Esophagus muscularis mucosa (tissue), 4 donors: ENCODE measurements at regions of chr5 and their contacts with region 1.

Region 1: GRCh38 chr5:71492817-71493615 is 37.6 kb downstream of the BDP1 start:
- DNase-seq: no peak
- H3K4me3 ChIP-seq: no peak overlapping the region
- H3K27ac ChIP-seq: no peak overlapping the region
- H3K4me1 ChIP-seq: no peaks in the 10 kb centered on the region
- H3K27me3 ChIP-seq: no peaks in the 10 kb centered on the region
- CTCF ChIP-seq: no peak
- EP300 ChIP-seq: no peak
- POLR2A ChIP-seq: no peak

Region 2: GRCh38 chr5:71537687-71538086 is 44.7 kb after region 1 on chr5:
- intact Hi-C with region 1: loop called (anchors 10 kb)
- DNase-seq: no peak
- H3K4me3 ChIP-seq: no peak overlapping the region
- H3K27ac ChIP-seq: no peak overlapping the region
- H3K4me1 ChIP-seq: peaks cover 0 to 5% (median 0%) of the 10 kb centered on the region in 4 donors
- H3K27me3 ChIP-seq: no peaks in the 10 kb centered on the region
- CTCF ChIP-seq: no peak
- EP300 ChIP-seq: no peak
- POLR2A ChIP-seq: no peak